B cell (primary cell): ENCODE measurements at regions of chr19 and their contacts with region 1.

Region 1: GRCh38 chr19:45370410-45371204 is at the start of gene ERCC2:
- DNase-seq: peak; percentile 99
- ATAC-seq: peak; percentile 97
- H3K4me3 ChIP-seq: peak within 1 kb of the TSS; percentile 55 to 83 (median 75)
- H3K4me3 Mint-ChIP-seq: peak within 1 kb of the TSS; percentile 94
- H3K27ac ChIP-seq: peak within 1 kb of the TSS; percentile 69 to 85
- H3K27ac Mint-ChIP-seq: peak within 1 kb of the TSS; percentile 92
- H3K4me1 ChIP-seq: peaks cover 3 to 12% of the 10 kb centered on the region in 2 donors
- H3K4me1 Mint-ChIP-seq: peaks cover 12% of the 10 kb centered on the region
- H3K27me3 ChIP-seq: no peaks in the 10 kb centered on the region
- H3K27me3 Mint-ChIP-seq: no peaks in the 10 kb centered on the region
- CTCF ChIP-seq: no peak
- total RNA-seq, gene ERCC2: 26.5 and 27.6 TPM in 2 replicates

Region 2: DNA sequence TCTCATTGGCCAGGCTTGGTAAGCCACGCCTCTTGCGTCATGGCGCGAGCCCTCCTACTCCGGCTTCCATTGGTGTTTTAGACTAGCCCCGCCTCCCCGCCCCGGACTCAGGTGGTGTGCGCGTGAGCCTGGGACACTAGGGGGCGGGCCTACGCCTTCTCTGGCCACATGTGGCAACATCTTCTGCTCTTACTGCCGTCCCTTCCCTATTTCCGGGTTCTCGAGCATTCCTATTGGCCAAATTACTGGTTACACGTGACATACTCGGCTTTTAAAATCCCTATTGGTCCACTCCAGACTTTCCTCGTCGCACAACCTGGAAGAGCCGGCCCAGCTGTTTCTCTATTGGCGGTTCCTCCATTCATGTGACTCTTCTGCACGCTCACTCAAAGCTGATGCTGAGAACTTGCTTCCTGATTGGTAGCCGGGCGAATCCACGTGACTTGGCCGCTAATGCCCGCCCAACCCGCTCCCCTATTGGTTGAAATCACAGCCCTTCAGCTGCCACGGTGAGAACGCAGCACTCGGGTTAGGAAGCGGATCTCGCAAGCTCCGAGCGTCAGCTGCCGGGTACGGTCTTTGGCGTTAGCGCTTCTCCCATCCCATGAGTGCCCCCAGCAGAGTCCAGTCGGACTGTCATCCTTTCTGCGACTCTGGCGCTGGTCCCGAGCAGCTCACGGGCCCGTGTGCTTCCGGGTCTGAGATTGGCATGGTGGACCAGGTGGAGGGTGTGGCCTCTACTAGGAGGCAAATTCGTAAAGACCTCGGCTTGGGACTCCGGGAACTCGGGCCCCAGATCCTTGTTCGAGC is 192.1 kb before region 1 on chr19 and contains the start of gene BLOC1S3:
- CTCF ChIA-PET with region 1: no interaction called
- POLR2A ChIA-PET with region 1: no interaction called
- intact Hi-C with region 1: loop called (anchors 1 kb)
- DNase-seq: peak; percentile 100
- ATAC-seq: peak; percentile 88
- H3K4me3 ChIP-seq: peak within 1 kb of the TSS; percentile 93 to 99 (median 95)
- H3K4me3 Mint-ChIP-seq: peak within 1 kb of the TSS; percentile 95
- H3K27ac ChIP-seq: peak within 1 kb of the TSS; percentile 86 to 91
- H3K27ac Mint-ChIP-seq: peak within 1 kb of the TSS; percentile 96
- H3K4me1 ChIP-seq: peaks cover 24 to 35% of the 10 kb centered on the region in 2 donors
- H3K4me1 Mint-ChIP-seq: peaks cover 39% of the 10 kb centered on the region
- H3K27me3 ChIP-seq: no peaks in the 10 kb centered on the region
- H3K27me3 Mint-ChIP-seq: no peaks in the 10 kb centered on the region
- CTCF ChIP-seq: peak; percentile 38
- total RNA-seq, gene BLOC1S3: 21.1 and 31.8 TPM in 2 replicates

Region 3: DNA sequence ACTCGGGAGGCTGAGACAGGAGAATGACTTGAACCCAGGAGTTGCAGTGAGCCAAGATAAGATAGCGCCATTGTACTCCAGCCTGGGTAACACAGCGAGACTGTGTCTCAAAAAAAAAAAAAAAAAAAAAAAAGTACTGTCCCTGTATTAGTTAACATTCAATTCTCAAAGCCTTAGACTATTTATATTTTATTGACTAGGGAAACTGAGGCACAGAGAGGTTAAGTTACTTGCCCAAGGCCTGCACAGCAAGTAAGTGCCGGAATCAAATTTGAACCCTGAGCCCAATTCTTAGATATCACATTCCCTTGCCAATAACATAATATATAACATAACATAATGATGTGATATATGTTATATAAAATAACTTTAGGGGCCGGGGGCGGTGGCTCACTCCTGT is 31.0 kb before region 1 on chr19:
- CTCF ChIA-PET with region 1: no interaction called
- POLR2A ChIA-PET with region 1: no interaction called
- intact Hi-C with region 1: loop called (anchors 2 kb)
- DNase-seq: no peak
- ATAC-seq: no peak
- H3K4me3 ChIP-seq: no peak overlapping the region
- H3K4me3 Mint-ChIP-seq: no peak overlapping the region
- H3K27ac ChIP-seq: no peak overlapping the region
- H3K27ac Mint-ChIP-seq: no peak overlapping the region
- H3K4me1 ChIP-seq: peaks cover 11 to 16% of the 10 kb centered on the region in 2 donors
- H3K4me1 Mint-ChIP-seq: peaks cover 6% of the 10 kb centered on the region
- H3K27me3 ChIP-seq: peaks cover 0 to 36% (median 6%) of the 10 kb centered on the region in 4 experiments
- H3K27me3 Mint-ChIP-seq: peaks cover 31% of the 10 kb centered on the region
- CTCF ChIP-seq: no peak